A549 (cell line): ENCODE measurements at regions of chr2 and their contacts with region 1.

Region 1: DNA sequence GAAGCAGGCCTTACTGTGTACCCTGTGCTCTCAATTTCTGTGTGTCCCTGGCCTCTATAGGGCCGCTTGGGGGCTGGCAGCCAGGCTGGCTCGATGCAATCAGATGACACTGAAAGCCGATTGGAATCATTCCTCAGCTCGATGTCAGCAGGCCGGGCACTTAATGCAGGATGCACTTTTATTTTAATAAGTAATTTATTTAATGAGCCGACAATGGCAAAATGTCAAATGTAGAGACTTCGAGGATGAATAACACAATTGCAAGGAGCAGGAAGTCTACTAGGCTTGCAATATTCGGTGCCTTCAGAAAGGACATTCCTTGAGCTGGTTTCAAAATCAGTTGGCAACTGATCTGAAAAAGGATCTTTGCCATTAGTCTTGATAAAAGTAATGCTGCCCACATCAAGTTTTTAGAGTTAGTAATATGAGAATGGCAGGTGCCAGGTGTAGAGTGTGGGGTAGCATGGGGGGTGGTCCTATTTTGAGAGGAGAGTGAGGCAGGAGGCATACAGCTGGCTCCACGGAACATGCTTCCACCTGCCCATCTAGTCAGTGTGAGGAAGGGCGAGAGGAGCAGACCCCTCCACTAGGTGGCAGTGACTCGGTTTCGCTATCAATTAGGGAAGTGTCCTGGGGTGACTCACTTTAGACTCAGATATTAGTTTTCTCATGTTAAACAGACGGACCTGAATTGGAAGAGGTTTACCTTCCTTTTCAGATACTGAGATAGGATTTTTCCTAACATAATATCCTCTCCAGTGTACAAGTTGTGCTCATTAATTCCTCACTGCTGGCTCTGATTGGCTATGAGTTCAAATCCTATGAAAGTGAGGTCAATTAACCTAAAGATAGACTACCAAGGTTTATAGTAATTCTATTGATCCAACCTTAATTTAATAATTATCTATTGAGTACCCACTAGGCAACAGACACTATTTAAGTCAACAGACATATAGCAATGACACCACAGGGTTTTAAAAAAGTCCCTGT is 80.9 kb downstream of the NABP1 start:
- DNase-seq: peak; percentile 77 to 87
- ATAC-seq: peak; percentile 100
- H3K4me3 ChIP-seq: peak overlapping the region; percentile 29
- H3K27ac ChIP-seq: peak overlapping the region; percentile 47 to 83
- H3K4me1 ChIP-seq: peaks cover 5% of the 10 kb centered on the region; the same call in 1 of the 3 replicates
- CTCF ChIP-seq: peak; percentile 77
- EP300 ChIP-seq: no peak
- POLR2A ChIP-seq: no peak
- RAD21 ChIP-seq: peak; percentile 53 to 59; a peak in 4 of 5 replicates

Region 2: DNA sequence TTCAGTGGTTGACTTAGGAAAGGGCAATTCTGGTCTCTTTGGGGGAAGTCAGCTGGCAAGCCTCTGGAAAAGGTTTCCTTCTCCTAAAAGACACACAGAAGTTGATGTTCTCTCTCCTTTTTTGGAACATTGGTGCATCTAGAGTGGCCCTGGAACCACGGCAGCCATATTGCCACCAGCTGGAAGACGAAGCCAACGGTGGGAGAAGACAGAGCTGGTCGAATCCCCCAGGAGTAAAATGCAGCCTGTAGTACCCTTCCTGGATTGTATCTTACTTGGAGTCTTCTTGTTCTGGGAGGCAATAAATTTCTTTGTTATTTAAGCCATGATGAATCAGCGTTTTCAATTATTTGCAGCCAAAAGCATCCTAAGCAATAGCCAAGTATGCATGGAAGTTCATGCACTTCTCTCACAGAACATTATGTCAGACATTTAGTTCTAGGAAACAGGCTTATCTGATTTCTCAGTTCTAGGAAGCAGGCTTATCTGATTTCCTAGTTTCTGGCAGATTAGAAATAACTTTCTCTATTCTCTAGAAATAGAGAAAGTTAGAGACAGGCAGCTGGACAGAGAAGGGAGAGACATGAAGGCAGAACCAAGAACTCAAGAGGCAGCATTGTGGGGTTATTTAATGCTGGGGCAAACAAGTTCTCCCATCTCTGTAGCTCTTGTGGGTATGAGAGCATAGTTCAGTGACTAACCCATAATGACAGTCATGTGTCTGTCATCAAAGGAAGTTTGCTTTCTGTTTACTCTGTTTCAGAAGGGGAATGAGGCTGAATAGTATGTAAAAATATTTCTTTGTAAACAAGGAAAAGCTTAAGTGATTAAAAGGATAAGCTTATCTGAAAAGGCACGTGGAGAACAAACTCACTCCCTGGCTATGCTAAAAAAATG is 121.4 kb before region 1 on chr2:
- CTCF ChIA-PET with region 1: no interaction called
- POLR2A ChIA-PET with region 1: no interaction called
- DNase-seq: peak; percentile 21 to 51
- ATAC-seq: peak; percentile 80 to 81
- H3K4me3 ChIP-seq: no peak overlapping the region
- H3K27ac ChIP-seq: peak overlapping the region; percentile 74 to 79
- H3K4me1 ChIP-seq: peaks cover 43% of the 10 kb centered on the region
- CTCF ChIP-seq: no peak
- EP300 ChIP-seq: peak in 1 of 2 experiments; percentile 40; a peak in 2 of 5 replicates
- POLR2A ChIP-seq: no peak
- RAD21 ChIP-seq: no peak

Region 3: DNA sequence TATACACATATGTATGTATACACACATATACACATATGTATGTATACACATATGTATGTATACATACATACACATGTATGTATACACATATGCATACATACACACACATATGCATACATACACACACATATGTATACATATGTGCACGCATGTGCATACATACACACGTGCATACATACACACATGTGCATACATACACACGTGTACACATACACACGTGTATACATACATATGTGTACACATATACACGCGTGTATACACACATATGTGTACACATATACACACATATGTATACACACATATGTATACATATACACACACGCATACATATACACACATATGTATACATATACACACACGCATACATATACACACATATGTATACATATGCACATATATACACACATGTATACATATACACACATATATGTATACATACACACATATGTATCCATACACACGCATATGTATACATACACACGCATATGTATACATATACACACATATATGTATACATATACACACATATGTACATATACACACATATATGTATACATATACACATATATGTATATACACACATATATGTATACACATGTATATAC is 59.4 kb before region 1 on chr2:
- CTCF ChIA-PET with region 1: no interaction called
- POLR2A ChIA-PET with region 1: no interaction called
- DNase-seq: no peak
- ATAC-seq: no peak
- H3K4me3 ChIP-seq: no peak overlapping the region
- H3K27ac ChIP-seq: no peak overlapping the region
- H3K4me1 ChIP-seq: peaks cover 4% of the 10 kb centered on the region; the same call in 1 of the 3 replicates
- CTCF ChIP-seq: no peak
- EP300 ChIP-seq: no peak
- POLR2A ChIP-seq: no peak
- RAD21 ChIP-seq: no peak

Region 4: DNA sequence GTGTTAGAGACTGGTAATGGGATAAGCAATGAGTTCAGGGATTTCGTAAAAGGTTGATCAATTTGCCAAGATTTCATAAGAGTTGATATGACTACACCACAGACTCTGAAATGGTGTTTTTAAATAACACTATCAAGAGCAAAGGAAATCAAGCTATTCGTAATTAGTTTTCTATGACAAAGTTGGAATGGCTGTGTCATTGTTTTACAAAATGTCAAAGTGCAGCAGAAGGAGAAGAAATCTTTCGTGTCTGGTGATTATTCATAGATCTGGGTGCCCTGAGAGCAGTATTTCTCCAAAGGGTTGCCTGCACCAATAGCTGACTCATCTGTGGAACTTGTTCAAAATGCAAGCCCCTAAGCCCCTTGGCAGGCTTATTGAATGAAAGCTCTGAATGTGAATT is 10.8 kb before region 1 on chr2:
- CTCF ChIA-PET with region 1: interaction called, 15 read pairs
- POLR2A ChIA-PET with region 1: no interaction called
- DNase-seq: no peak
- ATAC-seq: no peak
- H3K4me3 ChIP-seq: no peak overlapping the region
- H3K27ac ChIP-seq: no peak overlapping the region
- H3K4me1 ChIP-seq: 0 out of 3 replicates have a peak, but pooled peaks cover 3% of the 10 kb centered on the region
- CTCF ChIP-seq: no peak
- EP300 ChIP-seq: no peak
- POLR2A ChIP-seq: no peak
- RAD21 ChIP-seq: no peak

Region 5: GRCh38 chr2:191821078-191821477 is 62.3 kb after region 1 on chr2:
- CTCF ChIA-PET with region 1: no interaction called
- POLR2A ChIA-PET with region 1: no interaction called
- DNase-seq: no peak
- ATAC-seq: no peak
- H3K4me3 ChIP-seq: no peak overlapping the region
- H3K27ac ChIP-seq: no peak overlapping the region
- H3K4me1 ChIP-seq: no peaks in the 10 kb centered on the region
- CTCF ChIP-seq: no peak
- EP300 ChIP-seq: no peak
- POLR2A ChIP-seq: no peak
- RAD21 ChIP-seq: no peak

Region 6: GRCh38 chr2:191910518-191910917 is 151.7 kb after region 1 on chr2:
- CTCF ChIA-PET with region 1: no interaction called
- POLR2A ChIA-PET with region 1: no interaction called
- DNase-seq: no peak
- ATAC-seq: no peak; a peak in 1 of 6 replicates
- H3K4me3 ChIP-seq: no peak overlapping the region
- H3K27ac ChIP-seq: no peak overlapping the region
- H3K4me1 ChIP-seq: peaks cover 13% of the 10 kb centered on the region
- CTCF ChIP-seq: no peak
- EP300 ChIP-seq: no peak
- POLR2A ChIP-seq: no peak
- RAD21 ChIP-seq: no peak